Right cardiac atrium (tissue), 5 donors: ENCODE measurements at regions of chr7 and their contacts with region 1.

Region 1: DNA sequence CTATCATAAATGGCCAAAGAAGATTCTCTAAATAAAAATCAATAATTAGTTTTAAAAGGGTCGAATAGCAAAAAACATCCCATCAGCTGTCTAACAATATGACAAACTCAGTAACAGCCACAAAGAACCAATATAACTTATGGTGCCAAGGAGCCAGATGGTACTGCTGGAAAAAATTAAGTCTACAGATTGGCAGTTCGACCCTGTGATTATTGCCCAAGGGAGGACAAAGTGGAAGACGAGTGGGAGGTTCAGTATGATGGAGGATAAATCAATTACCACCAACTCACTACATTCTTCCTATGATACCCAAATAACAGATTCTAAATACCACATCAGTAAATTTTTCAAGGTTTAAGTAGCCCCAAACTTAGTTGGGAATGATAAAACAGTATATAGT is 49.0 kb downstream of the SKAP2 start:
- DNase-seq: no peak
- ATAC-seq: no peak
- H3K4me3 ChIP-seq: no peak overlapping the region
- H3K27ac ChIP-seq: no peak overlapping the region
- H3K4me1 ChIP-seq: no peaks in the 10 kb centered on the region
- H3K27me3 ChIP-seq: no peaks in the 10 kb centered on the region

Region 2: GRCh38 chr7:26760501-26760900 is 54.9 kb before region 1 on chr7:
- intact Hi-C with region 1: loop called in 1 of 4 experiments (anchors 10 kb)
- DNase-seq: no peak
- ATAC-seq: no peak
- H3K4me3 ChIP-seq: no peak overlapping the region
- H3K27ac ChIP-seq: no peak overlapping the region
- H3K4me1 ChIP-seq: no peaks in the 10 kb centered on the region
- H3K27me3 ChIP-seq: no peaks in the 10 kb centered on the region